ENCODE measurements at regions of chr13 and their contacts with region 1.

Region 1: DNA sequence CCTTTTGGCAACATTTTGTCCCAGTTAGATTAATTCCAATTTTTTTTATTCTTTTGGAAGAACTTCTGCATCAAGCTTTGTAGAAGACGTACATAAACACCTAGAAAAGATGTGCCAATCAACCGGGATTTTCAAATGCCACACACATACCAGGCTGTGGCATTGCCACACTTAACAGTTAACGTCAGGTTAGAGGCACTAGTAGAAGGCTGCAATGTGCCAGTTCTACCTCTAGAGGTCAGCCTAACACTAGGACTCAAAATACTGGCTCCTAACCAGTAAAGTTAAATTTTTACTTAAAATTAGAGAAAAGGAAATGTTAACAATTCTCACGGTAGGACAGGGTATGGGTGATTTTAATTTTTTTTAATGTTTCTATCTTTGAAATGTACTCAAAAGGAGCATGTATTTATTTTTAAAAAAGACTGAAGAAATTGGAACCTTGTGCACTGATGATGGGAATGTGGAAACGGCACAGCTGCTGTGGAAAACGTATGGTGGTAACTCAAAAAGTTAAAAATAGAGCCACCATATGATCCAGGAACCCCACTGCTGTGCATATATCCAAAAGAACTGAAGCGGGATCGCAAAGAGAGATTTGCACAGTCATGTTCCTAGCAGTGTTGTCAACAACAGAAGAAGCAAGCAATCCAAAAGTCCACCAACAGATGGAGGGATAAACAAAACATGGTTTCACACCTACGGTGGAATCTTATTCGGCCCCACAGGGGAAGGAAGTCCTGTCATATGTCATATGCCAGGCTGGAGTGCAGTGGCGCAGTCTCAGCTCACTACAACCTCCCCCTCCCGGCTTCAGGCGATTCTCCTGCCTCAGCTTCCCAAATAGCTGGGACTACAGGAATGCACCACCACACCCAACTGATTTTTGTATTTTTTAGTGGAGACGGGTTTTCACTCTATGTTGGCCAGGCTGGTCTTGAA is 30.3 kb downstream of the CRYL1 start:
- DNase-seq: peak; percentile 65
- ATAC-seq: peak; percentile 67
- H3K4me3 Mint-ChIP-seq: no peak overlapping the region
- H3K27ac Mint-ChIP-seq: no peak overlapping the region
- H3K4me1 Mint-ChIP-seq: no peaks in the 10 kb centered on the region
- H3K27me3 Mint-ChIP-seq: no peaks in the 10 kb centered on the region

Region 2: GRCh38 chr13:20475927-20476691 is 19.2 kb before region 1 on chr13:
- CTCF ChIA-PET with region 1: interaction called, 22 read pairs
- POLR2A ChIA-PET with region 1: no interaction called
- intact Hi-C with region 1: no loop called
- DNase-seq: peak; percentile 86
- ATAC-seq: peak; percentile 92
- H3K4me3 Mint-ChIP-seq: peak overlapping the region; percentile 67
- H3K27ac Mint-ChIP-seq: peak overlapping the region; percentile 92
- H3K4me1 Mint-ChIP-seq: peaks cover 40% of the 10 kb centered on the region
- H3K27me3 Mint-ChIP-seq: no peaks in the 10 kb centered on the region

Region 3: DNA sequence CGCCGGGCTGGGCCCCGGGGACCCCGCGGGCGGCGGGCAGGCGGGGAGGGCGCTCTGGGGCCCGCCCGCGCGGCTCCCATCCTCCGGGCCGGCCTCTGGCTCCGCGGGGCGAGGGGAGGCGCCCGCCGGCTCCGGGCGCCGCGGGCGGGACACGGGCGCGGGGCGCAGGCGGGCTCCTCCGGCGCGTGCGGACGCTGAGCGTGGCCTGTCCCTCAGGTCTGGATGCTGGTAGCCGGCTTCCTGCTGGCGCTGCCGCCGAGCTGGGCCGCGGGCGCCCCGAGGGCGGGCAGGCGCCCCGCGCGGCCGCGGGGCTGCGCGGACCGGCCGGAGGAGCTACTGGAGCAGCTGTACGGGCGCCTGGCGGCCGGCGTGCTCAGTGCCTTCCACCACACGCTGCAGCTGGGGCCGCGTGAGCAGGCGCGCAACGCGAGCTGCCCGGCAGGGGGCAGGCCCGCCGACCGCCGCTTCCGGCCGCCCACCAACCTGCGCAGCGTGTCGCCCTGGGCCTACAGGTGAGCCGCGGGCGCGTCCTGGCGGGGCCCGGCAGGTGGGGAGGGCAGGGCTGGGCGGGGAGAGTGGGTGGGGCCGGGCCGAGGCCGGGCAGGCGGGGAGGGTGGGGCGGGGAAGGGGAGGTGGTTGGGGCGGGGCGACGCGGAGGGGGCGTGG is 208.6 kb after region 1 on chr13:
- CTCF ChIA-PET with region 1: interaction called, 28 read pairs
- POLR2A ChIA-PET with region 1: no interaction called
- intact Hi-C with region 1: loop called (anchors 2 kb)
- DNase-seq: peak; percentile 87
- ATAC-seq: peak; percentile 89
- H3K4me3 Mint-ChIP-seq: peak overlapping the region; percentile 58
- H3K27ac Mint-ChIP-seq: no peak overlapping the region
- H3K4me1 Mint-ChIP-seq: peaks cover 13% of the 10 kb centered on the region
- H3K27me3 Mint-ChIP-seq: peaks cover 21% of the 10 kb centered on the region

Region 4: DNA sequence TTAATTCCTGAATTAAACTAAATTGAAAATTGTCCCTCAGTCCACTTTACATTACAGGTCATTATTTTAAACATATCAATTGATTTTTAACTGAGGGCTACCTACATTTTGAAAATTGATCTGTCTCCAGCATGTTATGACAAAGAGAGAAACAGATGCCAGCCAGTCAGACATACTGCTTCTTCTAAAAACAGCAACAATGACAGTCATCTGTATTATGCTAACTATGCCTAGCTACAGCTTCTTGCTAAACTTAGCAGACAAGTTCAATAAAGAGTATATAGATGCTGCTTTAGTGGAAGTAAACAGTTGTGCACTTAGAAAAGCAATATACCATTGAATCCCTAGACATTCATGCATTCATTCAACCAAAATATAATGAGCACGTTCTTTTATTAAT is 327.1 kb after region 1 on chr13:
- CTCF ChIA-PET with region 1: interaction called, 11 read pairs
- POLR2A ChIA-PET with region 1: no interaction called
- intact Hi-C with region 1: no loop called
- DNase-seq: no peak
- ATAC-seq: no peak
- H3K4me3 Mint-ChIP-seq: no peak overlapping the region
- H3K27ac Mint-ChIP-seq: no peak overlapping the region
- H3K4me1 Mint-ChIP-seq: peaks cover 12% of the 10 kb centered on the region
- H3K27me3 Mint-ChIP-seq: no peaks in the 10 kb centered on the region

Region 5: GRCh38 chr13:20924758-20925394 is 429.5 kb after region 1 on chr13:
- CTCF ChIA-PET with region 1: interaction called, 64 read pairs
- POLR2A ChIA-PET with region 1: no interaction called
- intact Hi-C with region 1: loop called (anchors 1 to 2 kb)
- DNase-seq: peak; percentile 88
- ATAC-seq: peak; percentile 42
- H3K4me3 Mint-ChIP-seq: no peak overlapping the region
- H3K27ac Mint-ChIP-seq: no peak overlapping the region
- H3K4me1 Mint-ChIP-seq: no peaks in the 10 kb centered on the region
- H3K27me3 Mint-ChIP-seq: no peaks in the 10 kb centered on the region

Region 6: GRCh38 chr13:21476893-21477472 is 981.6 kb after region 1 on chr13:
- CTCF ChIA-PET with region 1: no interaction called
- POLR2A ChIA-PET with region 1: no interaction called
- intact Hi-C with region 1: loop called in 1 of 2 experiments (anchors 5 kb)
- DNase-seq: peak; percentile 91
- ATAC-seq: peak; percentile 96
- H3K4me3 Mint-ChIP-seq: peak overlapping the region; percentile 78
- H3K27ac Mint-ChIP-seq: peak overlapping the region; percentile 52
- H3K4me1 Mint-ChIP-seq: peaks cover 8% of the 10 kb centered on the region
- H3K27me3 Mint-ChIP-seq: no peaks in the 10 kb centered on the region